ENCODE measurements at regions of chr1 and their contacts with region 1.

Region 1: DNA sequence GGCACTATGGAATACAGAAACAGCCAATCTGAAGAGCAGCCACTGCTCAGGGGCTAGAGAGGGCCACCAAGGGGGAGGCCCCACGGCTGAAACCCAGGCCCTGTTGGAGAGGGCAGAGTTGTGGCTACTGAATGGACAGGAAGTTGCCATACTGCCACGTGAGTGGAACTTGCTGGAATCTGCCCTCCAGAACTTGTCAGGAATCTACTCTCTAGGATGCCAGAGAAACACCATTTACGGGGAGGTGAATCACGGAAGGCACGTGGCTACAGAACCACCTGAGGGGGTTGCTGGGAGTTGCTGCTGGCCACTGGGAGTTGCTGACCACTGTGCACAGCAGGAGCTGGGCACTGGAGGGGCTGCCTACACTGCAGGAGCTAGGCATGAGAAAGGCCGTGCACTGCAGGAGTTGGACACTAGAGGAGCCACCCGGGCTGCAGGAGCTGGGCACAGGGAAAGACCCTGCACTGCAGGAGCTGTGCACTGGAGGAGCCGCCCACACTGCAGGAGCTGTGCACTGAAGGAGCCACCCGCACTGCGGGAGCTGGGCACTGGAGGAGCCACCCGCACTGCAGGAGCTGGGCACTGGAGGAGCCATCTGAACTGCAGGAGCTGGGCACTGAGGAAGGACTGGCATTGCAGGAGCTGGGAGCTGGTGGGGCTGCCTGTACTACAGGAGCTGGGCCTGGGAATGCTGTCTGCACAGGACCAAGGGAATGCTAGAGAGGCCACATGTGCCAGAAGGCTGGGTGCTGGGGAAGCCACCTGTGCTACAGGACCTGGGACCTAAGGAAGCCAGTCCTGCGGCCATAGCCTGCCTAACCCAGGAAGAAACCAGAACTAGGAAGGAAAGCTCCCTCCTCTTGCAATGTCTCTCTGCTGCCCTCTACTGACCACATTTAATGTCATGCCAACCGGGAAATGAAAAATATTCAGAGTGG is 343.4 kb downstream of the MATN1 start:
- DNase-seq: peak in 8 of 9 experiments; percentile 5 to 75 (median 44)
- ATAC-seq: no peak
- H3K4me3 ChIP-seq: no peak overlapping the region
- H3K4me3 Mint-ChIP-seq: no peak overlapping the region
- H3K27ac ChIP-seq: no peak overlapping the region
- H3K27ac Mint-ChIP-seq: no peak overlapping the region
- H3K4me1 ChIP-seq: peaks cover 6% of the 10 kb centered on the region
- H3K4me1 Mint-ChIP-seq: peaks cover 2% of the 10 kb centered on the region
- H3K27me3 ChIP-seq: no peaks in the 10 kb centered on the region
- H3K27me3 Mint-ChIP-seq: peaks cover 33% of the 10 kb centered on the region
- CTCF ChIP-seq: peak; percentile 78

Region 2: DNA sequence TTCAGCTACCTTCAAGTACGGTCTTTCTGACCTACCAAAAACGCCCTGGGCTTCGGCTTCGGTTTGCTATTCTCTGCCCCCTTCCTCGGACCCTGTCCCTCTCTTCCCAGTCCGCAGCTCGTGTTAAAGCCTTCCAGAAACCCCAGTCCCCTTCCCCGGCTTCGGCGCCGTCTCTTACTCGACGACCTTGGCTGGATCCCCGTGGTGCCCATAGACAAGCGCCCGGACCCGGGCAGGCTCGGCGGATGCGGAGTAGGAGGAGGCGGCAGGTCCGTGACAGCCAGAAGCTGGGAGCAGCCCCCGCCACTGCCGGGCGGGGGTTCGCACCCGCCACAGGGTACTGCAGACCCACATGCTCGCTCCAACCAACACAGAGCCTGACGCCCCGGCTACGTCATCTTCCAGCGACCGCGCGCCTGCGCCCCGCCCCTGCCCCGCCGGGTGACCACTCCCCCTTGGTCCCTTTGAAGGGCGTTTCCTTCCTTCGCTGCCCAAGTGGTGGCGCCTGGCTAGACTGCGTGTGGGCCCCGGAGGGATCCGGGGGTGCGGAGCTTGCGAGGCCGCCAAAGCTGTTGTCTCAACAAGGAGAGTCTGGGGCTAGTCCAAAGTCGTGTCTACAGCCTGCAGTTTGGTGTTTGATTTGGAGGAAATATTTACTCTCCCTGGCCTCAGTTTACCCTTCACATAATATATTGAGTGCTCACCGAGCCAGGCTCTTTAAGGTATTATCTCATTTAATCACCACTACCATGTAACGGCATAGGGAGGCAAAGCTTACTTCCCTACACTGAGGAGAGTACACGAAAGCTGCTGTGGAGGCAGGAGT is 1149.2 kb before region 1 on chr1 and contains the start of gene MECR:
- CTCF ChIA-PET with region 1: interaction called, 47 read pairs
- POLR2A ChIA-PET with region 1: no interaction called
- intact Hi-C with region 1: no loop called
- DNase-seq: peak; percentile 88 to 97 (median 94)
- ATAC-seq: peak; percentile 97
- H3K4me3 ChIP-seq: peak within 1 kb of the TSS; percentile 76 to 91
- H3K4me3 Mint-ChIP-seq: peak within 1 kb of the TSS; percentile 91
- H3K27ac ChIP-seq: peak within 1 kb of the TSS; percentile 62 to 65
- H3K27ac Mint-ChIP-seq: peak within 1 kb of the TSS; percentile 94
- H3K4me1 ChIP-seq: peaks cover 9% of the 10 kb centered on the region
- H3K4me1 Mint-ChIP-seq: peaks cover 28% of the 10 kb centered on the region
- H3K27me3 ChIP-seq: no peaks in the 10 kb centered on the region
- H3K27me3 Mint-ChIP-seq: peaks cover 8% of the 10 kb centered on the region
- CTCF ChIP-seq: no peak
- total RNA-seq, gene MECR: 5.5 to 8.0 TPM

Region 3: DNA sequence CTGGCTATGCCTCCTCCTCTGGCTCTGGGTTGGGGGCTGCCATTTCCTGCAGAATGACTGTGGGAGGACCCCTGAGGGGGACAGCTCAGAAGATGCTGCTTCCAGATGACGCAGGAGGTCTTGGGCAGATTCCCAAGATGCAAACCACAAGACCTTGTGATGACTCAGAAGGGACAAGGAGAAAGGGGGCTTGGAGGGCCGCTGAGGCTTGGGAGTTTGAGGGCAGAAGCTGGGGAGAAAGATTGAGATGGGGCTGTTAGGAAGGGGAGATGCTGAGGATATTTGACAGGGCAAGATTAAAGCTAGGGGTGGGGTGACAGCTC is 1136.1 kb before region 1 on chr1:
- CTCF ChIA-PET with region 1: interaction called, 13 read pairs
- POLR2A ChIA-PET with region 1: no interaction called
- intact Hi-C with region 1: no loop called
- DNase-seq: no peak
- ATAC-seq: no peak
- H3K4me3 ChIP-seq: no peak overlapping the region
- H3K4me3 Mint-ChIP-seq: no peak overlapping the region
- H3K27ac ChIP-seq: no peak overlapping the region
- H3K27ac Mint-ChIP-seq: no peak overlapping the region
- H3K4me1 ChIP-seq: no peaks in the 10 kb centered on the region
- H3K4me1 Mint-ChIP-seq: peaks cover under 1% of the 10 kb centered on the region
- H3K27me3 ChIP-seq: peaks cover 0 to 3% of the 10 kb centered on the region in 2 experiments
- H3K27me3 Mint-ChIP-seq: peaks cover 29% of the 10 kb centered on the region
- CTCF ChIP-seq: no peak

Region 4: GRCh38 chr1:30286241-30286987 is 93.5 kb before region 1 on chr1:
- CTCF ChIA-PET with region 1: no interaction called
- POLR2A ChIA-PET with region 1: no interaction called
- intact Hi-C with region 1: no loop called
- DNase-seq: peak in 1 of 9 experiments; percentile 37
- ATAC-seq: no peak
- H3K4me3 ChIP-seq: no peak overlapping the region
- H3K4me3 Mint-ChIP-seq: no peak overlapping the region
- H3K27ac ChIP-seq: no peak overlapping the region
- H3K27ac Mint-ChIP-seq: no peak overlapping the region
- H3K4me1 ChIP-seq: no peaks in the 10 kb centered on the region
- H3K4me1 Mint-ChIP-seq: peaks cover 15% of the 10 kb centered on the region
- H3K27me3 ChIP-seq: no peaks in the 10 kb centered on the region
- H3K27me3 Mint-ChIP-seq: peaks cover 2% of the 10 kb centered on the region
- CTCF ChIP-seq: no peak

Region 5: DNA sequence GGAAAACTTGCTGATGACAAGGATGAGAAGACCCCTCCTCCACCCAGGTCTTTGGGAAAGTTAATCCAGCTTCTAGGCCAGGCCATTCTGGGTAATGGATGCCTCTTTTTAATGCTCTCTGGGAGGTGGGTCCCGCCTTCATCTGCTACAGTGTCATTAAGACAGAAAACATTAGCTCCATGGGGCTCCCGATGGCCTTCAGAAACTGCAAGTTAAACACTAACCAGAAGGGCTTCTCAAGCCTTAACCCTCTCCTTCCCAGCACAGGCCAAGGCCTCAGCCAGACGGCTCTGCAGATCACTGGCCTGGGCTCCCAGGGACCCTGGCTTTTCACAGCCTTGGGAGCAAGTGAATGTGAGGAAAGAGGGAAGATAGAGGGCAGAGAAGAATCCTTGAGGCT is 21.5 kb before region 1 on chr1:
- CTCF ChIA-PET with region 1: interaction called, 10 read pairs
- POLR2A ChIA-PET with region 1: no interaction called
- intact Hi-C with region 1: no loop called
- DNase-seq: no peak
- ATAC-seq: no peak
- H3K4me3 ChIP-seq: no peak overlapping the region
- H3K4me3 Mint-ChIP-seq: no peak overlapping the region
- H3K27ac ChIP-seq: no peak overlapping the region
- H3K27ac Mint-ChIP-seq: no peak overlapping the region
- H3K4me1 ChIP-seq: no peaks in the 10 kb centered on the region
- H3K4me1 Mint-ChIP-seq: no peaks in the 10 kb centered on the region
- H3K27me3 ChIP-seq: no peaks in the 10 kb centered on the region
- H3K27me3 Mint-ChIP-seq: peaks cover 34% of the 10 kb centered on the region
- CTCF ChIP-seq: no peak

Region 6: DNA sequence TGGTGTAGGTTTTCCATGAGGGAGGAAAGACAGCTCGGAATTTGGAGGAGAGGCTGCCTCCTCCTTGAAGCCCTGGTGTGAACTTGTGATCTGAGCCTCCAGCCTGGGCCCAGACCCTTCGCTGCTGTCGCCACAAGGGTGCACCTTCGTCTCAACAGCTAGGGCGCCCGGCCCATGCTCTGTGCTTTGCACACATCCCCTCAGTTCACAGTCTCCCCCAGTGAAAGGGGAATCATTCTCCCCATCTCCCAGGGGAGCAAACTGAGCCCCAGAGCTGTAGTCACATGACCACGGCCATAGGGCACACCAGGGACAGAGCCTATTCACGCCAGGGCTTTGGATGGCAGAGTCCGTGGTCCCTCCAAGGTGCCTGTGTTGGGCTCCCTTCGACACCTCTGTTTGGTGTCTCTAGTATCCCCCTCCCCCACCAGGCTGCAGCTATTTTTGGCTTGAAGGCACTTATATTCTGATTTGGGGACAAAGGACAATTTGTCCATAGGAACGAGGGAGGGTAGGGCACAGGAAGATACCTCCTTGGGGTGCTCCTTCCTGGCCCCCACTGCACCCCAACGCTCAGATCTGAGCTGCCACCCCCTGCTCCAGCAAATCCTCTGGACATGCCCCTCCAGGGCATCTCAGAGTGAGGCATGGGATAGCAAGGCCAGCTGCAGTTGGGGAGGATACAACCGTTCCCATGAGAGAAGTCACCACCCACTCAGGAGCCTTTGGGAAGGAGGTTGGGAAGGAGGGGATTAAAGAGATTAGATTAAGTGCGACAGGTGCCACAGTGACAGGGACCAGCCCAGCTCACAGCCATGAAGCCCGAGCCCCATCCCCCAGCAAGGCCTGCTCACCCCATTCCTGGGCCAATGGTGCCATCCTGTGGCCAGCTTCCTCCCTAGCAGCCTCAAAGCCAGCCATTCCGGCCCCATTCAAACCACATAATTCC is 327.7 kb after region 1 on chr1:
- CTCF ChIA-PET with region 1: no interaction called
- POLR2A ChIA-PET with region 1: no interaction called
- intact Hi-C with region 1: loop called in 1 of 2 experiments (anchors 5 kb)
- DNase-seq: peak in 7 of 9 experiments; percentile 25 to 74 (median 60)
- ATAC-seq: peak; percentile 89
- H3K4me3 ChIP-seq: no peak overlapping the region
- H3K4me3 Mint-ChIP-seq: no peak overlapping the region
- H3K27ac ChIP-seq: no peak overlapping the region
- H3K27ac Mint-ChIP-seq: no peak overlapping the region
- H3K4me1 ChIP-seq: no peaks in the 10 kb centered on the region
- H3K4me1 Mint-ChIP-seq: peaks cover 6% of the 10 kb centered on the region
- H3K27me3 ChIP-seq: no peaks in the 10 kb centered on the region
- H3K27me3 Mint-ChIP-seq: peaks cover 14% of the 10 kb centered on the region
- CTCF ChIP-seq: peak; percentile 51